ENCODE measurements at regions of chr1 and their contacts with region 1.

Region 1: GRCh38 chr1:10494754-10495474 is 20.2 kb downstream of the PEX14 start:
- DNase-seq: peak; percentile 67 to 81 (median 71)
- H3K4me3 ChIP-seq: peak overlapping the region; percentile 95
- H3K4me3 Mint-ChIP-seq: peak overlapping the region; percentile 85 to 90 (median 87)
- H3K27ac ChIP-seq: peak overlapping the region; percentile 64
- H3K27ac Mint-ChIP-seq: peak overlapping the region; percentile 91 to 97 (median 96)
- H3K4me1 ChIP-seq: peaks cover 18% of the 10 kb centered on the region
- H3K4me1 Mint-ChIP-seq: peaks cover 45 to 58% (median 50%) of the 10 kb centered on the region in 3 donors
- H3K27me3 ChIP-seq: no peaks in the 10 kb centered on the region
- H3K27me3 Mint-ChIP-seq: no peaks in the 10 kb centered on the region

Region 2: DNA sequence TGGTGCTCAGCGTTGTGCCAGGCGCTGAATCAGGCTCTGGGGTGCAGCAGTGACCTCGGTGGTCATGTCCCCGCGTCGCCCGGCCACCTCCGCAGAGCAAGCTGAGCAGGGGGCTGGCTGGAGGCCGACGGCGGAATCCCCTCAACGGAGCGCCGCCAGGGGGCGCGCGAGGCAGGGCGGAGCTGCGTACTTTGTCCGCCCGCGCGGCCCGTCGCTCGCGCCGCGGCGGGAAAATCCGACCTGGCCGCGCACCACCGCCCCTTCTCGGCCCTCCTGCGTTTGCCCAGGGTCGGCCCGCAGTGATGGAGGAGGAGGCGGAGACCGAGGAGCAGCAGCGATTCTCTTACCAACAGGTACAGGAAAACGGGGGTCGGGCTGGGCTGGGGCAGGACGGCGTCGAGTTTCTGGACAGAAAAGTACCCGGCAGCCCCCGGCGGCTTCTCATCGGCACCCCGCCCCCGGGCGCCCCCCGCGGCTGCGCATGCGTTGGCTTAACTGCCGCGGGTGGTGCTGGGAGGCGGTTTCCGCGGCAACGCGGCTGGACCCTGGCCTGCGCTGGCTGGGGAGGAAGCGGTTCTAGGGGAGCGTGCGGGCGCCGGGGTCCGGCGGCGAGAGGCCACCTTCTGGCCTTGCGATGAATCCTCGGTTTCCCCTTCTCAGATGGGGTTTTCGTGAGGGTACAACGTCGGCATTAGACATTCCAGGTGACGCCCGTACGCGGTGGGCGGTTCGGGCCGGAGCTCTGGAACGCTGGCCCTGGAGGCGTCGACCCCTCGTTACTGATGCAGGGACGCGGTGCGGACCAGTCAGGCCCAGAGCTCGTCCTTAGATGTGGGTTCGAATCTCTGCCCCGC is 64.5 kb before region 1 on chr1 and contains the start of gene CENPS:
- CTCF ChIA-PET with region 1: interaction called, 37 read pairs
- POLR2A ChIA-PET with region 1: no interaction called
- DNase-seq: peak; percentile 83 to 94 (median 91)
- H3K4me3 ChIP-seq: peak within 1 kb of the TSS; percentile 82
- H3K4me3 Mint-ChIP-seq: peak within 1 kb of the TSS; percentile 83 to 96 (median 89)
- H3K27ac ChIP-seq: peak within 1 kb of the TSS; percentile 82
- H3K27ac Mint-ChIP-seq: peak within 1 kb of the TSS; percentile 83 to 95 (median 90)
- H3K4me1 ChIP-seq: peaks cover 18% of the 10 kb centered on the region
- H3K4me1 Mint-ChIP-seq: peaks cover 15 to 33% (median 21%) of the 10 kb centered on the region in 3 donors
- H3K27me3 ChIP-seq: no peaks in the 10 kb centered on the region
- H3K27me3 Mint-ChIP-seq: peaks cover 0 to 1% of the 10 kb centered on the region in 2 donors
- total RNA-seq, gene CENPS: 32.2 TPM

Region 3: GRCh38 chr1:10451287-10451686 is 43.6 kb before region 1 on chr1:
- CTCF ChIA-PET with region 1: no interaction called
- POLR2A ChIA-PET with region 1: no interaction called
- DNase-seq: no peak
- H3K4me3 ChIP-seq: no peak overlapping the region
- H3K4me3 Mint-ChIP-seq: no peak overlapping the region
- H3K27ac ChIP-seq: no peak overlapping the region
- H3K27ac Mint-ChIP-seq: no peak overlapping the region
- H3K4me1 ChIP-seq: no peaks in the 10 kb centered on the region
- H3K4me1 Mint-ChIP-seq: no peaks in the 10 kb centered on the region
- H3K27me3 ChIP-seq: no peaks in the 10 kb centered on the region
- H3K27me3 Mint-ChIP-seq: no peaks in the 10 kb centered on the region

Region 4: DNA sequence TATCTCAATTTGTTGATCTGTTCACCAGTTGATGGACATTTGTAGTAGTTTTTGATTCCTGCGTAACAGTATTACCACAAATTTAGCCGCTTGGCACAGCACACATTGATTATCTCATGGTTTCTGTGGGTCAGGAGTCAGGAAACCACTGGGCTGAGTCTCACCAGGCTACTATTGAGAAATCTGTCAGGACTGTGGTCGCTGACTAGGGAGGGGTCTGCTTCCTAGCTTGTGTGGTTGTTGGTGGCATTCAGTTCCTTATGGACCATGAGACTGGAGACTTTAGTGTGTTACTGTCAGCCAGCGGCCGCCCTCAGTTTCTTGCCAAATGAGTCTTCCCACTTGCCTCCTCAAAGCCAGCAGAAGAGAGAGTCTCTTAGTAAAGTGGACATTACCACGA is 10.4 kb before region 1 on chr1:
- CTCF ChIA-PET with region 1: interaction called, 14 read pairs
- POLR2A ChIA-PET with region 1: no interaction called
- DNase-seq: no peak
- H3K4me3 ChIP-seq: no peak overlapping the region
- H3K4me3 Mint-ChIP-seq: no peak overlapping the region
- H3K27ac ChIP-seq: no peak overlapping the region
- H3K27ac Mint-ChIP-seq: no peak overlapping the region
- H3K4me1 ChIP-seq: no peaks in the 10 kb centered on the region
- H3K4me1 Mint-ChIP-seq: peaks cover 13 to 25% (median 16%) of the 10 kb centered on the region in 3 donors
- H3K27me3 ChIP-seq: no peaks in the 10 kb centered on the region
- H3K27me3 Mint-ChIP-seq: no peaks in the 10 kb centered on the region

Region 5: GRCh38 chr1:10507111-10507879 is 12.4 kb after region 1 on chr1:
- CTCF ChIA-PET with region 1: interaction called, 78 read pairs
- POLR2A ChIA-PET with region 1: interaction called, 6 read pairs
- DNase-seq: peak; percentile 31 to 72 (median 39)
- H3K4me3 ChIP-seq: no peak overlapping the region
- H3K4me3 Mint-ChIP-seq: peak overlapping the region in 2 of 7 donors; percentile 34 to 83
- H3K27ac ChIP-seq: no peak overlapping the region
- H3K27ac Mint-ChIP-seq: peak overlapping the region in 7 of 8 donors; percentile 48 to 89 (median 86)
- H3K4me1 ChIP-seq: peaks cover 42% of the 10 kb centered on the region
- H3K4me1 Mint-ChIP-seq: peaks cover 36 to 60% (median 47%) of the 10 kb centered on the region in 3 donors
- H3K27me3 ChIP-seq: no peaks in the 10 kb centered on the region
- H3K27me3 Mint-ChIP-seq: no peaks in the 10 kb centered on the region

Region 6: DNA sequence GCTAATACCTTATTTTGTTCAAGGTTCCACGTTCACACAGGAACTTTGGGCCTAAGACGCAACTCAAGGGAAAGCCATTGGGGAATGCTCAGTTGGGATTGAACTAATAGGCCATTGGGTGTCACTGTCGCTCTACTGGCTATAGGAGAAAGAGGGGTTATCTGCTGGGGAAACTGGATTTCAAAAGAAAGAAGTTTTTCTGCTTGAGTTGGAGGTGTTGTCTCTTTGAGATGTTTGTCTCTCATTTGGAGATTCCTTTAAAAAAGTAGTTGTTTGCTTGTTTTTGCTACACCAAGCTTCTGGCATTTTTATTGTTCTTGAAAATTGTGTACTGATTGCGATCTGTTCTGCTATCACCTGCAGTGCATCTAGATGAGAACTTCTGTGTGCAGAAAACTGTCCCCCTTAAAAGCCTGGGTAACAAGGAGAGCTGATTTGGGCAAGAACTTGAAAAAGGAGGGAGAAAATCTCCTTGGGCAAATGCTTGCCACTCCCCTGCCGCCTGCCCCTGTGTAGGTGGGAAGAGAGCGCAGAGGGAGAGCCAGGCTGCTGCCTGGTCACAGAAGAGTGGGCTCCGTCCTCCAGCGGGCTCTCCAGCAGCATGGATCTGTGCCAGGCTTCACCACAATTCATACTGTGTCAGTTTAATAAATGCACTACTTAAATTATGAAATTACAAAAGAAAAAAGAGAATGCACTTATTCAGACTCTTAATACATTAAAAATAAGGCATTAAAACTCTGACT is 19.7 kb after region 1 on chr1:
- CTCF ChIA-PET with region 1: interaction called, 78 read pairs
- POLR2A ChIA-PET with region 1: interaction called, 4 read pairs
- DNase-seq: peak in 2 of 5 donors; percentile 21 to 59
- H3K4me3 ChIP-seq: no peak overlapping the region
- H3K4me3 Mint-ChIP-seq: peak overlapping the region; percentile 8 to 68 (median 45)
- H3K27ac ChIP-seq: no peak overlapping the region
- H3K27ac Mint-ChIP-seq: peak overlapping the region; percentile 77 to 96 (median 90)
- H3K4me1 ChIP-seq: peaks cover 75% of the 10 kb centered on the region
- H3K4me1 Mint-ChIP-seq: peaks cover 80 to 94% (median 91%) of the 10 kb centered on the region in 3 donors
- H3K27me3 ChIP-seq: no peaks in the 10 kb centered on the region
- H3K27me3 Mint-ChIP-seq: no peaks in the 10 kb centered on the region

Region 7: GRCh38 chr1:10639775-10640578 is 145.1 kb after region 1 on chr1:
- CTCF ChIA-PET with region 1: no interaction called
- POLR2A ChIA-PET with region 1: no interaction called
- DNase-seq: no peak
- H3K4me3 ChIP-seq: no peak overlapping the region
- H3K4me3 Mint-ChIP-seq: no peak overlapping the region
- H3K27ac ChIP-seq: no peak overlapping the region
- H3K27ac Mint-ChIP-seq: peak overlapping the region in 1 of 8 donors; percentile 24
- H3K4me1 ChIP-seq: no peaks in the 10 kb centered on the region
- H3K4me1 Mint-ChIP-seq: peaks cover 0 to 9% (median 1%) of the 10 kb centered on the region in 3 donors
- H3K27me3 ChIP-seq: no peaks in the 10 kb centered on the region
- H3K27me3 Mint-ChIP-seq: no peaks in the 10 kb centered on the region

Region 8: DNA sequence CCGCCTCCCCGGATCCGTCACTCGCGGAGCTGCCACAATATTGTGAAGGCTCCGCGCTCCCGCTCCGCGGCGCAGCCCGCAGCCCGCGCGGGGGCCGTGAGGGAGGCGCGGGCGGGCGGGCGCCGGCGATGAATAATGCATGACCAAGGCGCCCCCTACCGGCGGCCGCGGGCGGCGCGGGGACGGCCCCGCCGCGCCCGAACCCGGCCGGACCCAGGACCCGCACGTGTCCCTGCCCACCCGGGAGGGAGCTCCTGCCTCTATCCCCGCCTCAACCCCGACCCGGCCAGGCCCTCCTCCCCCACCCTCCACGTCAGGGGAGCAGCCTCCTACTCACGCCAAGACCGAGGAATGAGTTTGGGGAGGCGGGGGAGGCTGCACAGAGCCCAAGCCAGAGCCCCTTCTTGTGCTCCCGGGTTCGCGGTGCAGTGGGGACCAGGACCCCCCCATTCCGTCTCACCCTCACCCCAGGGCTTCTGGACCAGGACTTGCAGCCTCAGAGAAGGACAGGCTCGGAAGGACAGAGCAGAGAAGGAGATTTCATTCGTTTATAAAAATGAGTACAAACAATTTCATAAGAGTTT is 372.3 kb after region 1 on chr1:
- CTCF ChIA-PET with region 1: interaction called, 10 read pairs
- POLR2A ChIA-PET with region 1: no interaction called
- DNase-seq: peak; percentile 55 to 74 (median 59)
- H3K4me3 ChIP-seq: peak overlapping the region; percentile 20
- H3K4me3 Mint-ChIP-seq: peak overlapping the region in 6 of 7 donors; percentile 15 to 46 (median 36)
- H3K27ac ChIP-seq: no peak overlapping the region
- H3K27ac Mint-ChIP-seq: peak overlapping the region in 1 of 8 donors; percentile 69
- H3K4me1 ChIP-seq: peaks cover 6% of the 10 kb centered on the region
- H3K4me1 Mint-ChIP-seq: peaks cover 7 to 21% (median 16%) of the 10 kb centered on the region in 3 donors
- H3K27me3 ChIP-seq: peaks cover 33% of the 10 kb centered on the region
- H3K27me3 Mint-ChIP-seq: peaks cover 26 to 67% of the 10 kb centered on the region in 2 donors

Region 9: GRCh38 chr1:10909697-10910671 is 415.1 kb after region 1 on chr1:
- CTCF ChIA-PET with region 1: interaction called, 32 read pairs
- POLR2A ChIA-PET with region 1: no interaction called
- DNase-seq: peak; percentile 63 to 84 (median 72)
- H3K4me3 ChIP-seq: no peak overlapping the region
- H3K4me3 Mint-ChIP-seq: no peak overlapping the region
- H3K27ac ChIP-seq: no peak overlapping the region
- H3K27ac Mint-ChIP-seq: peak overlapping the region in 1 of 8 donors; percentile 82
- H3K4me1 ChIP-seq: peaks cover 21% of the 10 kb centered on the region
- H3K4me1 Mint-ChIP-seq: peaks cover 7 to 19% (median 13%) of the 10 kb centered on the region in 3 donors
- H3K27me3 ChIP-seq: no peaks in the 10 kb centered on the region
- H3K27me3 Mint-ChIP-seq: peaks cover 3 to 5% of the 10 kb centered on the region in 2 donors